GM10248 (cell line): ENCODE measurements at regions of chr3 and their contacts with region 1.

Region 1: DNA sequence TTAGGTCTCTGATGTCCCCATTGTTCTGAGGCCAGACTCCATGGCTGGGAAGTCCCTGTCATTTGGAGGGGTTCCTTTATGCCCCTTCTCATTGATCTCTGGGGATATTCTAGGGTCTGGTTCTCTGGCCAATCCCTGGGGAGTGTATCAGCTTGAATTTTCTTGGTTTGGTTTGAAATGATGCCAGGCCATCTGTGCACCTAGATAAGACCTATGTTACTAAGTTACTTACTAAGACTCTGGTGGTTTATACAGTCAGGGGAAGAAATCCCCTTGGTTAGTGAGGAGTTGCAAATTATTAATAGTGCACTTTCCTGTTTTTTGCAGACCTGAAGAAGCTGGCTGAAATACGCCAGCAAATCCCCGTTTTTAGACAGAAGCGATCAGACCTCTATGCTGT is 20.3 kb downstream of the NIT2 start:
- DNase-seq: no peak
- CTCF ChIP-seq: no peak

Region 2: DNA sequence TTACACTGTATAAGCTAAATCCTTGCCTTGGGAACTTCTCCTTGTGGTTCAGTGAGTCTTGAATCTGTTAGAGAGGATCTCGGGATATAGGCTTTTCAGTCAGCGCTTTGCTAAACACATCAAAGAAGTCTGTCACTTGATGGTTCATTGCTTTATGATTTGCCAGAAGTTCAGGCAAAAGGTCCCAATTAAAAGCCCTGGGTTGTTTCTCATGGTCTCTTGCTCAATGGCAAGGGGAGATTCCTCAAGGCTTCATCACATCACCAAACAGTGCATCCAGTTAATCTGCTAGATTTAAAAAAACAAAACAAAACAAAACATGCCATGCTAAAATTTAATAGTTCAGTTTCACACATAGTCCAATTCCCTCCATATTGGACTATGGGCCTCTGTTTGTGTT is 355.3 kb before region 1 on chr3:
- CTCF ChIA-PET with region 1: no interaction called
- POLR2A ChIA-PET with region 1: no interaction called
- DNase-seq: no peak
- CTCF ChIP-seq: no peak

Region 3: GRCh38 chr3:100306695-100307094 is 48.2 kb before region 1 on chr3:
- CTCF ChIA-PET with region 1: no interaction called
- POLR2A ChIA-PET with region 1: no interaction called
- DNase-seq: no peak
- CTCF ChIP-seq: no peak

Region 4: GRCh38 chr3:100325827-100326226 is 29.0 kb before region 1 on chr3:
- CTCF ChIA-PET with region 1: no interaction called
- POLR2A ChIA-PET with region 1: no interaction called
- DNase-seq: no peak
- CTCF ChIP-seq: no peak

Region 5: DNA sequence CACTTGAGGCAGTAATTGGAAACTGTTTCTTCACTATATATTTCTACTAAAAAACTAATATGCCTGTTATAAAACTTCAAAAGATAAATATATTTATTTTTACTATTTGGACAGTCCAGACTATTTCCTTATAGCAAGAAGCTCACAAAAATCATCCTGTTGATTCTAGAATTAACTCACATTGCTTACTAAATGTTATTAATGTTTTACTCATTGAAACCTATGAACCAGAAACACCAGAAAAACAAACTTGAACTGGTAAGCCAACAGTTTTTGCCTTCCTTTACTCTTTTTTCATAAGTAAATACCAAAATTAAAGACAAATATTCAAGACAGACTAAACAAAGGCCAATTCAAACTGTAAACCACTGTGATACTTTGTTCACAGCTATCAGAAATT is 19.7 kb after region 1 on chr3:
- CTCF ChIA-PET with region 1: interaction called, 23 read pairs
- POLR2A ChIA-PET with region 1: no interaction called
- DNase-seq: no peak
- CTCF ChIP-seq: no peak